AG04449 (cell line): ENCODE measurements at regions of chr4 and their contacts with region 1.

Region 1: DNA sequence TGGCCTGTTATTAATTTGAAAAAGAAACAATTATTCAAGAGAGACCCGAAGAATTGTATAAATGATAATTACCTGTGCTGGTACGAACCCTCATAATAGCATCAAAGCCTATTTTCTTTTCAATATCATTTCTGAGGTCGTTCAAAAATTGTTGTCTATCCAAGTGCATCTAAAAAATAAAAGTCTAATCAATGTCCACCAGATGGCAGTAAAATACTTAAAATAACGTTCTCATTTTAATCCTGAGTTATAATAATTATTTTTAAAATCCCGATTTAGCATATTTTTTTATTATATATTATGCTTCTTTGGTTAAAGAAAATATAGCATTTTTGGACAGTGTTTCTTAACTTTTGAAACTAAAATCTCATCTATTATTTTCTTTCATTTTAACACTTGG is 55.7 kb downstream of the METTL14 start:
- DNase-seq: no peak
- H3K4me3 ChIP-seq: no peak overlapping the region
- CTCF ChIP-seq: no peak

Region 2: GRCh38 chr4:118751629-118752323 is 10.9 kb after region 1 on chr4:
- CTCF ChIA-PET with region 1: interaction called, 20 read pairs
- POLR2A ChIA-PET with region 1: interaction called, 4 read pairs
- DNase-seq: no peak
- H3K4me3 ChIP-seq: no peak overlapping the region
- CTCF ChIP-seq: no peak

Region 3: DNA sequence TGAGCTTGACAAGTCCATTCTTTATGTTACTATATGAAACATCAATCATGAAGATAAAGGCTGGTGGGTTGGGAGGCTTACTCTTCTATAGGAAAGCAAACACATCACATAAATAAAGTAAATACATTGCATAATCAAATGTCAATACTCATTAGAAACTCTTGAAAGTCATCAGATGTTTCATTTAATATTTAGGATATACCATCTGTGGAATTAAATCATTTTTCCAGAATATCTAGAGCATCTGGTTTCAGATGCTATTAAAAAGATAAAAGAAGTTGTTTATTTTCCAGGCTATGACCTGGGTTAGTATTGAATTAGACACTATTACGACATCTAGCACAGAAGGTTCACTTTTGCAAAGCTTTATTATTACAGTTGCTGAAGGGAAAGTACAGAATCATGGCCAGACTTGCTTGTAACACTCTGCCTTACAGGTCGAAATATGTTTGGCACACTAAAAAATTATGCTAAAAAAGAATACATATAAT is 16.9 kb after region 1 on chr4:
- CTCF ChIA-PET with region 1: interaction called, 20 read pairs
- POLR2A ChIA-PET with region 1: no interaction called
- DNase-seq: no peak
- H3K4me3 ChIP-seq: no peak overlapping the region
- CTCF ChIP-seq: no peak